GM12878 (cell line): ENCODE measurements at regions of chr15 and their contacts with region 1.

Region 1: GRCh38 chr15:30859091-30859874 is 44.4 kb upstream of the FAN1 start:
- DNase-seq: no peak
- ATAC-seq: peak; percentile 75
- H3K4me3 ChIP-seq: no peak overlapping the region
- H3K27ac ChIP-seq: no peak overlapping the region
- H3K4me1 ChIP-seq: no peaks in the 10 kb centered on the region
- H3K27me3 ChIP-seq: no peaks in the 10 kb centered on the region
- CTCF ChIP-seq: peak; percentile 55 to 77 (median 62)
- EP300 ChIP-seq: no peak
- POLR2A ChIP-seq: no peak
- RAD21 ChIP-seq: peak; percentile 45

Region 2: GRCh38 chr15:30670056-30670455 is 189.2 kb before region 1 on chr15:
- CTCF ChIA-PET with region 1: interaction called, 5 read pairs
- POLR2A ChIA-PET with region 1: no interaction called
- RAD21 ChIA-PET with region 1: no interaction called
- SMC1A ChIA-PET with region 1: interaction called, 5 read pairs
- in situ Hi-C with region 1: no loop called
- intact Hi-C with region 1: loop called (anchors 5 kb)
- DNase-seq: no peak
- ATAC-seq: no peak
- H3K4me3 ChIP-seq: no peak overlapping the region
- H3K27ac ChIP-seq: no peak overlapping the region
- H3K4me1 ChIP-seq: no peaks in the 10 kb centered on the region
- H3K27me3 ChIP-seq: no peaks in the 10 kb centered on the region
- CTCF ChIP-seq: no peak
- EP300 ChIP-seq: no peak
- POLR2A ChIP-seq: no peak
- RAD21 ChIP-seq: no peak

Region 3: DNA sequence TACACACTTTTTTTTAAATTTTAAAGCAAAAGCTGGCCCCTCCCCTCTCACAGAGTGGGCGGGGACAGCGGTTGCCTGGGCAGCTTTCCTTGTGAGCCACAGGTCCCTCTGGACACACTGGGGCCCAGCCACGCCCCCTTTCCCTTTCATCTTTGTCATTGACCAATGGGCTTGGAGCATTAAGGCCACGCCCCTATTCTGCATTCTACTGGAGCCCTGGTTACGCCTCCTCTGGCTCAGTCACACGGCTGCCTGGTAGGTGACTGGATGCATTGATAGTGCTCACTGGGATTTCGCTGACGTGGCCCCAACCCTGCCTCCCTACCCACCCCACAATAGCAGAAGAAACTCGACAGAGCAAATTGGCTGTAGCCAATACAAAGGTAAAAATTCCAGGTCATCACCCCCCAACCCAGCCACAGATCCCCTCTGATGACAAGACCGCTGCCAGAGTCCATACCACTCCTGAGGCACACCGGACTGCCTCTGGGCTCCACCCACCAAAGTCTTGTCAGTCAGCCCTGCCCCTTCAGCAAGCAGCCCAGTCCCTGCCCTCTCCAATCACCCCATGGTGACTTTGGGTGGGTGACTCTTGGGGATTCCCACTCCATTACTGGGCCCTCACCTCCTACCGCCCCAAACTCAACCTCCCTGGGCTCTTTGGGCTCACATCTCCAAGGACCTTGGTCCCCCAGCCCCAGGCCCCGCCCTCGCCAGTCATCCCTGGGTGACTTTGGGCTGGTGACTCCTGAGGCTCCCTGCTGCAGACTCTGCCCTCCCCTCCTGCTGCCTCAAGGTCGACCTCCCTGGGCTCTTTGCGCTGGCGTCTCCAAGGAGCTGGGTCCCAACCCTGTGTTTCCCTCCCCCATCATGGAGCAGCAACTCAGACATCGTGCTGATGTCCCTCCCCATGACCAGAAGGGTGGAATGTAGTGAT is 67.8 kb before region 1 on chr15:
- CTCF ChIA-PET with region 1: no interaction called
- POLR2A ChIA-PET with region 1: no interaction called
- RAD21 ChIA-PET with region 1: no interaction called
- SMC1A ChIA-PET with region 1: interaction called, 5 read pairs
- in situ Hi-C with region 1: no loop called
- intact Hi-C with region 1: loop called (anchors 5 kb)
- DNase-seq: no peak
- ATAC-seq: no peak
- H3K4me3 ChIP-seq: no peak overlapping the region
- H3K27ac ChIP-seq: no peak overlapping the region
- H3K4me1 ChIP-seq: no peaks in the 10 kb centered on the region
- H3K27me3 ChIP-seq: no peaks in the 10 kb centered on the region
- CTCF ChIP-seq: no peak
- EP300 ChIP-seq: no peak
- POLR2A ChIP-seq: no peak
- RAD21 ChIP-seq: no peak

Region 4: DNA sequence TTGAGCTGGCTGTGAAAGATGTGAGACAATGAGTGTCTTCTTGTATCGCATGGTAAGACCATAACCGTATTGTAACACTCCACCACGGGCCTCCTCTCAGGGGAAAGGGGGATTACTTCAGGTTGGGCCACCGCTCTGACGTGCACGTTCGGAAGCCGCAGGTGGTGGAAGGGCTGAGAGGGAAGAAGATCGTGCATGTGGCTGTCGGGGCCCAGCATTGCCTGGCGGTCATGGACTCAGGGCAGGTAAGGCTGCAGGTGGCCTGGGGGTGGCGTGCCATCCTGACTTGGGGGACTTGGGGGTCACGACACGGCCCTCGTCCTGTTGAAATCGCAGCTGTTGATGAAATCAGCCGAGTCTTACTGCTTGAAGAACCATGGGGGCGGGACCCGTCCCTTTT is 42.9 kb before region 1 on chr15:
- CTCF ChIA-PET with region 1: no interaction called
- POLR2A ChIA-PET with region 1: no interaction called
- RAD21 ChIA-PET with region 1: no interaction called
- SMC1A ChIA-PET with region 1: no interaction called
- in situ Hi-C with region 1: no loop called
- intact Hi-C with region 1: no loop called
- DNase-seq: no peak
- ATAC-seq: no peak
- H3K4me3 ChIP-seq: no peak overlapping the region
- H3K27ac ChIP-seq: no peak overlapping the region
- H3K4me1 ChIP-seq: no peaks in the 10 kb centered on the region
- H3K27me3 ChIP-seq: no peaks in the 10 kb centered on the region
- CTCF ChIP-seq: no peak
- EP300 ChIP-seq: no peak
- POLR2A ChIP-seq: no peak
- RAD21 ChIP-seq: no peak

Region 5: DNA sequence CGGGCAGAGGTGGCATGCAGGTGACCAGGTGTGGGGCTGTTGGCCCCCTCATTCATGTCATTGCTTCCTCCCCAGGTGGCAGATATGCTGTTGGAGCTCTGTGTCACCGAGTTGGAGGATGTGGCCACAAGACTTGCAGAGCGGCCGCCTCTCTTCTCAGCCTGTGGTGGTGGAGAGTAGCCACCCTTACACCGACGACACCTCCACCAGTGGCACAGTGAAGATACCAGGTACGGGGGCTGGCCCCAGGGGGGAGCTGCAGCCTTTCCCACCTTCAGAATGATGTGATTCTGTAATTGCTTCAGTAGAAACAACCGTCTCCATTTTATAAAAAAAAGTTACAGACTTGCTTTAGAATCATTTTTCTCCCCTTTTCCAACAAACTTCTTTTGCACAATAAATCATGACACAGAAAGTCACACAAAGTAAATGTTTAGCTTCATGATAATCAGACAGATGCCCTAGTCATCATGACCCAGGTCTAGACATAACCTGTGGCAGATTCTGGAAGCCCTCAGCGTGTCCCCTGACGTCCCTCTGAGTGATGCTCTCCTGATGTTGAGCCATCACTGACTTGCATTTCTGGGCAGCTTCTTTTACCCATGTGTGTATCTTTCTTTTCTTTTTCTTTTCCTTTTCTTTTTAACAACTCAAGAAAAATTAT is 31.5 kb before region 1 on chr15:
- CTCF ChIA-PET with region 1: interaction called, 6 read pairs
- POLR2A ChIA-PET with region 1: interaction called, 3 read pairs
- RAD21 ChIA-PET with region 1: no interaction called
- SMC1A ChIA-PET with region 1: interaction called, 10 read pairs
- in situ Hi-C with region 1: no loop called
- intact Hi-C with region 1: no loop called
- DNase-seq: no peak
- ATAC-seq: no peak
- H3K4me3 ChIP-seq: no peak overlapping the region
- H3K27ac ChIP-seq: no peak overlapping the region
- H3K4me1 ChIP-seq: no peaks in the 10 kb centered on the region
- H3K27me3 ChIP-seq: no peaks in the 10 kb centered on the region
- CTCF ChIP-seq: no peak
- EP300 ChIP-seq: no peak
- POLR2A ChIP-seq: no peak
- RAD21 ChIP-seq: no peak

Region 6: DNA sequence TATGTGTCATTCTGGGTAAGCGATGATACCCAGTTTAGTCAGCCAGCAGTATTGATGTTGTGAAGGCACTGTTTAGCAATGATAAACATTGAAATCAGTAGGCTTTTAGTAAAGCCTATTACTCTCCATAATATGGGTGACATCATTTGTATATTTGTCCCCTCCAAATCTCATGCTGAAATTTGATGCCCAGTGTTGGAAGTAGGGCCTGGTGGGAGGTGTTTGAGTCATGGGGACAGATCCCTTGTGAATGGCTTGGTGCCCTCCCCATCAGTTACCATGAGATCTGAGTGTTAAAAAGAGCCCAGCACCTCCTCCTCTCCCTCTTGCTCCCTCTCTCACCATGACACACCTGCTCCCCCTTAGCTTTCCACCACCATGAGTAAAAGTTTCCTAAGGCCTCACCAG is 13.1 kb after region 1 on chr15:
- CTCF ChIA-PET with region 1: interaction called, 11 read pairs
- POLR2A ChIA-PET with region 1: no interaction called
- RAD21 ChIA-PET with region 1: no interaction called
- SMC1A ChIA-PET with region 1: no interaction called
- in situ Hi-C with region 1: no loop called
- intact Hi-C with region 1: no loop called
- DNase-seq: no peak
- ATAC-seq: no peak
- H3K4me3 ChIP-seq: no peak overlapping the region
- H3K27ac ChIP-seq: no peak overlapping the region
- H3K4me1 ChIP-seq: no peaks in the 10 kb centered on the region
- H3K27me3 ChIP-seq: no peaks in the 10 kb centered on the region
- CTCF ChIP-seq: no peak
- EP300 ChIP-seq: no peak
- POLR2A ChIP-seq: no peak
- RAD21 ChIP-seq: no peak

Region 7: DNA sequence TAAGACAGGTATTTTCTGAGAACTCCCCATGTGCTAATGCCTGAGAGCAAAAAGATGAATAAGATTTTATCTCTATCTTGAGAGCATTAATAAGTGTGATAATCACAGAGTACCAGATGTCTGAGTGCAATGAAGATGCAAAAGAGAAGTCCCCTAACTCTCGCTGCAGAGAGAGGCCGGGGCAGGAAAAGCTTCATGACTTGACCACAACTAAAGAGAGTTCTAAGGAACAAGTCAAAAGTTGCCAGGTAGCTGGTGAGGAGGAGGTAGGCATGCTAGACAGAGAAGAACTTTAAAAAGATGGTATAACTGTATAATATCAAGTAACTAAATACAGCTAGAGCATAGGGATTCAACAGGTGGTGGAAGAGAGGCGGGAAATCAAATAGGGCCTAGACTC is 103.4 kb after region 1 on chr15:
- CTCF ChIA-PET with region 1: no interaction called
- POLR2A ChIA-PET with region 1: no interaction called
- RAD21 ChIA-PET with region 1: no interaction called
- SMC1A ChIA-PET with region 1: no interaction called
- in situ Hi-C with region 1: no loop called
- intact Hi-C with region 1: no loop called
- DNase-seq: no peak
- ATAC-seq: no peak
- H3K4me3 ChIP-seq: no peak overlapping the region
- H3K27ac ChIP-seq: no peak overlapping the region
- H3K4me1 ChIP-seq: peaks cover 4% of the 10 kb centered on the region; the same call in 1 of the 2 replicates
- H3K27me3 ChIP-seq: no peaks in the 10 kb centered on the region
- CTCF ChIP-seq: no peak
- EP300 ChIP-seq: no peak
- POLR2A ChIP-seq: no peak
- RAD21 ChIP-seq: no peak

Region 8: GRCh38 chr15:31024330-31024729 is 165.0 kb after region 1 on chr15:
- CTCF ChIA-PET with region 1: no interaction called
- POLR2A ChIA-PET with region 1: no interaction called
- RAD21 ChIA-PET with region 1: no interaction called
- SMC1A ChIA-PET with region 1: no interaction called
- in situ Hi-C with region 1: no loop called
- intact Hi-C with region 1: no loop called
- DNase-seq: no peak
- ATAC-seq: no peak
- H3K4me3 ChIP-seq: no peak overlapping the region
- H3K27ac ChIP-seq: no peak overlapping the region
- H3K4me1 ChIP-seq: peaks cover 4% of the 10 kb centered on the region
- H3K27me3 ChIP-seq: no peaks in the 10 kb centered on the region
- CTCF ChIP-seq: no peak
- EP300 ChIP-seq: no peak
- POLR2A ChIP-seq: no peak
- RAD21 ChIP-seq: no peak